Activated T-helper 1 cell treated with anti-CD3 and anti-CD28 coated beads, Interleukin-12 subunit alpha, Interleukin-12 subunit beta, Interleukin-2, Interleukin-4 antibody, amounts not matched to agents 30 ng/mL and 10 ng/mL and 1 ng/mL, durations not matched to agents 14 hours and 24 hours and 36 hours (primary cell): ENCODE measurements at regions of chr4 and their contacts with region 1.

Region 1: DNA sequence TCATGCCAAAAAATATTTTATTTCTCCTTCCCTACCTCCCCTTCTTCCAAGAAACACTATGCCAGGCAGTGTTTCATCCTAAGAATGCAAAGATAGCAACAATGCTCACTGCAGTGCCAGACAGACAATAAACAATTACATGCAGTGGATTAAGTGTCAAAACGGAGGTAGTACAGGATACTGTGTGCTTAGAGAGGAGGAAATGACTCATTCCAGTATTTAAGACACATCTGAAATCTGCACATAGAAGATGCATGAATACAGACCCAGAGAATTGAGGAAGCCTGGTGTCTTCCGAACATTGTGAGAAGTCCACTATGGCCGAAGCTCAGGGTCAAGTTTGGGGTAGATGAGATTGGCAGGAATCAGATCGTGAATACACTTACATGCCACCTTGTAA is 326.4 kb downstream of the PPP3CA start:
- DNase-seq: peak; percentile 16
- H3K4me3 Mint-ChIP-seq: peak overlapping the region; percentile 43
- H3K27ac Mint-ChIP-seq: peak overlapping the region; percentile 67
- H3K4me1 Mint-ChIP-seq: peaks cover 62% of the 10 kb centered on the region
- H3K27me3 Mint-ChIP-seq: no peaks in the 10 kb centered on the region

Region 2: DNA sequence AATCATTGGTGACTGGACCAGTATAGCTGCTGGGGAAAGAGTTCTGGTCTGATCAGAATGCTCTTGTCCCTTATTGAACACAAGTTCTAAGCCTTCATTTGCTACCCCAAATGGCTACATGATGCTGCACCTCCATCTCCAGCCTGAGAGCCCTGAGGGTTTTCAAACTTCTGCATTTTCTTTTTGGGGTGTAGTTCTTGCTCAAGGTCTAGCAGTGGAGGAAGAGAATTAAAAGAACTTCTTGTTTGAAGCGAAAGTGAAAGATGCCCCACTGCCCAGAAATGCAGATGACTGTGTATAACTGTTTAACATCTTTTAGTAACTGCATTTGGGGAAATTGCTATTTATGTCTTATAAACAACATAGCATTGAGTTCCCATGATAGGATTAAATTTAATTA is 1165.3 kb before region 1 on chr4:
- intact Hi-C with region 1: loop called (anchors 5 kb)
- DNase-seq: no peak
- H3K4me3 Mint-ChIP-seq: peak overlapping the region; percentile 59
- H3K27ac Mint-ChIP-seq: peak overlapping the region; percentile 71
- H3K4me1 Mint-ChIP-seq: peaks cover 86% of the 10 kb centered on the region
- H3K27me3 Mint-ChIP-seq: no peaks in the 10 kb centered on the region

Region 3: GRCh38 chr4:101037938-101038413 is 17.0 kb after region 1 on chr4:
- intact Hi-C with region 1: no loop called
- DNase-seq: no peak
- H3K4me3 Mint-ChIP-seq: peak overlapping the region; percentile 55
- H3K27ac Mint-ChIP-seq: peak overlapping the region; percentile 63
- H3K4me1 Mint-ChIP-seq: peaks cover 23% of the 10 kb centered on the region
- H3K27me3 Mint-ChIP-seq: peaks cover 2% of the 10 kb centered on the region

Region 4: GRCh38 chr4:101050088-101050836 is 29.3 kb after region 1 on chr4:
- intact Hi-C with region 1: loop called (anchors 2 kb)
- DNase-seq: no peak
- H3K4me3 Mint-ChIP-seq: no peak overlapping the region
- H3K27ac Mint-ChIP-seq: no peak overlapping the region
- H3K4me1 Mint-ChIP-seq: no peaks in the 10 kb centered on the region
- H3K27me3 Mint-ChIP-seq: no peaks in the 10 kb centered on the region

Region 5: GRCh38 chr4:101205916-101206315 is 185.0 kb after region 1 on chr4:
- intact Hi-C with region 1: loop called (anchors 2 kb)
- DNase-seq: peak; percentile 56
- H3K4me3 Mint-ChIP-seq: peak overlapping the region; percentile 0
- H3K27ac Mint-ChIP-seq: peak overlapping the region; percentile 67
- H3K4me1 Mint-ChIP-seq: peaks cover 42% of the 10 kb centered on the region
- H3K27me3 Mint-ChIP-seq: no peaks in the 10 kb centered on the region

Region 6: GRCh38 chr4:101347557-101348366 is 326.8 kb after region 1 on chr4:
- intact Hi-C with region 1: loop called (anchors 2 kb)
- DNase-seq: peak; percentile 95
- H3K4me3 Mint-ChIP-seq: peak overlapping the region; percentile 92
- H3K27ac Mint-ChIP-seq: peak overlapping the region; percentile 88
- H3K4me1 Mint-ChIP-seq: peaks cover 33% of the 10 kb centered on the region
- H3K27me3 Mint-ChIP-seq: peaks cover 53% of the 10 kb centered on the region